Activated CD4-positive, alpha-beta memory T cell treated with anti-CD3 and anti-CD28 coated beads, Interleukin-2, amount 10 ng/mL, durations not matched to agents 7 days and 5 days (primary cell): ENCODE measurements at regions of chr17 and their contacts with region 1.

Region 1: GRCh38 chr17:67390646-67391384 is 13.7 kb downstream of the PITPNC1 start:
- DNase-seq: peak; percentile 78
- H3K4me3 Mint-ChIP-seq: peak overlapping the region; percentile 40
- H3K27ac Mint-ChIP-seq: peak overlapping the region; percentile 78
- H3K4me1 Mint-ChIP-seq: peaks cover 45% of the 10 kb centered on the region
- H3K27me3 Mint-ChIP-seq: no peaks in the 10 kb centered on the region

Region 2: DNA sequence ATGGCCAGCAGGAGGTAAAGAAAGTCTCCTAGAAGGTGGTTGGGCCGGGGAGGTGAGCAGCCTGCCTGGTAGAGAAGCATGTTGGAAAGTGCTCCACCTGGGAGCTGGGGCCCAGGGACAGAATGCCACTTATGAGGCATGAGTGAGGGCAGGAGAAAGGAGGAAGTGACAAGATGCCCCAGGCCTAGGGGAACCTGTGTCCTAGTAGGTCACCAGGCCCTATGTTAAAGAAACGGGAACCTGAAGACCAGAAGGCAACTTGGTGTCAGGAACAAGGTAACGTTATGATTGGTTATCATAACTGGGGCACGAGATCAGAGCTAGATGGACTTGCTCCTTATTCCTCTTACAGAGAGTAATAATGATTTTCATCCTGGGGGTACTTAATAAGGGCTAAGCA is 20.6 kb after region 1 on chr17:
- CTCF ChIA-PET with region 1: no interaction called
- POLR2A ChIA-PET with region 1: no interaction called
- DNase-seq: no peak
- H3K4me3 Mint-ChIP-seq: no peak overlapping the region
- H3K27ac Mint-ChIP-seq: no peak overlapping the region
- H3K4me1 Mint-ChIP-seq: peaks cover 4% of the 10 kb centered on the region
- H3K27me3 Mint-ChIP-seq: no peaks in the 10 kb centered on the region

Region 3: DNA sequence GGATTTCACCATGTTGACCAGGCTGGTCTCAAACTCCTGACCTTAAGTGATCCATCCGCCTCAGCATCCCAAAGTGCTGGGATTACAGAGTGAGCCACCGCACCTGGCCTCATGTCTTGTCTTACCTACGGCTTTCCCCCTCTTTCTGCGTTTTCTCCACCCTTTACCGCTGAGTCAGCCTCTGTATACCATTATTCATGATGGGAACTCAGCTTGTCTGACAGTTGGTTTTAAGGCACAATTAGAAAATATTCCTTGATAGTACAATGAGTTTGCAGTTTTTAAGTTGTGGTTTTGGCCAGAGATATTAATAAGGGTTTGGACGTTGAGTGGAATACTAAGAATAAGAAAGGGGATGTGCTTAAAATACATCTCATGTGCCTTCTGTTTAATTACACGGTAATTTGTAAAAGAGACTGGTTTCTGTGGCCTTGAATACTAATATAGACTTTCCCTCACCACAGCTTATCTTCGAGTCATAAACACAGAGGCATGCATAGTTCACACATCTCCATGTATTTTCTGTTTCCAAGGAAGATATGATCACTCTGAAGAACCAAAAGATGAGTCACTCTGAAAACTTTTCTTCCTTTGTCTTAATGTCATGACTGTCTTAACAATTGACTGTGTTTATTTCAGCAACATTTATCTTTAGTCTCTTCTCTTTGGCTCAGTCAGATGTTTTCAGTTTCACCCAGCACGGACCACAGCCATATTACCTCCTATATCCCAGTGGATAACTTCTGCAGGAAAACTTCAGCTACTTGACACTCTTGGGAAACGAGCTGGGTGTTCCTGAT is 40.6 kb after region 1 on chr17:
- CTCF ChIA-PET with region 1: interaction called, 4 read pairs
- POLR2A ChIA-PET with region 1: interaction called, 16 read pairs
- DNase-seq: no peak
- H3K4me3 Mint-ChIP-seq: no peak overlapping the region
- H3K27ac Mint-ChIP-seq: peak overlapping the region; percentile 11
- H3K4me1 Mint-ChIP-seq: peaks cover 55% of the 10 kb centered on the region
- H3K27me3 Mint-ChIP-seq: peaks cover 3% of the 10 kb centered on the region